ENCODE measurements at regions of chr7 and their contacts with region 1.

Region 1: DNA sequence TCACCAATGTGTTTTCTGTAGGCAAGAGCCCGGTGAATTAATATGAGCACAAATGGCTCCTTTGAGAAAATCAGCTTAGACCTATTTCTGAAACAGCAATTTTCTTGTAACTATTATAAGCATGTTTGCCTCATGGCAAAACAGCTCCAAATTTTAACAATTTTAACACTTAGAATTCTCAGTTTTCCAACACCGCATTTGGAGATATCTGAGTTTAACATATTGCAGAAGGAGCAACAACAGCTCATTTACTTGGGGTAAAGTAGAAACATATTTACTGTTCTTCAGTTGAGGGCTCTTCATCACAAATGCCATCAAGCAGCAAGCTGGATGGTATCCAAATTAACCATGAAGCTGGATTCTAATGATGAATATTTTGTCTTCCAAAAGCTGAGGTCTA is 134.0 kb upstream of the SLC26A5 start:
- DNase-seq: no peak
- ATAC-seq: no peak
- H3K4me3 ChIP-seq: no peak overlapping the region
- H3K27ac ChIP-seq: no peak overlapping the region
- H3K4me1 ChIP-seq: no peaks in the 10 kb centered on the region
- H3K27me3 ChIP-seq: no peaks in the 10 kb centered on the region
- CTCF ChIP-seq: no peak
- POLR2A ChIP-seq: no peak

Region 2: GRCh38 chr7:103777440-103777839 is 197.4 kb after region 1 on chr7:
- intact Hi-C with region 1: no loop called
- DNase-seq: no peak
- ATAC-seq: no peak
- H3K4me3 ChIP-seq: no peak overlapping the region
- H3K27ac ChIP-seq: no peak overlapping the region
- H3K4me1 ChIP-seq: no peaks in the 10 kb centered on the region
- H3K27me3 ChIP-seq: no peaks in the 10 kb centered on the region
- CTCF ChIP-seq: no peak
- POLR2A ChIP-seq: no peak

Region 3: GRCh38 chr7:104156842-104157277 is 576.8 kb after region 1 on chr7:
- intact Hi-C with region 1: loop called in 1 of 2 experiments (anchors 10 kb)
- DNase-seq: no peak
- ATAC-seq: peak; percentile 43 to 72 (median 53)
- H3K4me3 ChIP-seq: no peak overlapping the region
- H3K27ac ChIP-seq: no peak overlapping the region
- H3K4me1 ChIP-seq: no peaks in the 10 kb centered on the region
- H3K27me3 ChIP-seq: no peaks in the 10 kb centered on the region
- CTCF ChIP-seq: peak; percentile 62 to 70 (median 66)
- POLR2A ChIP-seq: no peak

Measured in right lobe of liver (tissue), 6 donors.